ENCODE measurements at regions of chr7 and their contacts with region 1.

Region 1: DNA sequence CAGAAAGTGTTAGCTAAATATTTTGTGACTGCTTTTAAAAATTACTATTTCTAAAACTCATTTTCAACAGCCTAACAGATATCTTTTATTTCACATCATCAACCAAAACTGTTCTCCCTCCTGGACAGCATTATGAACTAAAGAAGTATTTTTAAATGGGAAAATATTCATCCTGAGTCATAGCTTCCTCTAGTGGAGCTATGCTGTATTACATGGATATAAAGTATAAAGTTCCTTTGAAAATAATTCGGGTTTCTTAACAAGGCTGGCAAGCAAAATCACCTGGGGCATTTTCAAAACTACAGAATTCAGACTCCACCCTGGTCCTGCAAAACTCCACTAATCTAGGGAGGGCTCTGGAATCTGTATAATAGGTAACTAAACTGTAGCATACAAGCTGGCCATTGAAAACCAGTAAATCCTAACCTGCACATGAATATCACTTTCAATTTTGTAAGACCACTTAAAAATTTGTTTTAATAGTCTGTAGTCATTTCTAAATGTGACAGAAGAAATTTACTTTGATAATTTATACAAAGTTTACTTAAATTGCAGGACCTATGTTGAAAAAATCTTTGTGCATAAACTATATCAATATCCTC is 53.5 kb downstream of the SCIN start:
- DNase-seq: no peak
- H3K4me3 ChIP-seq: no peak overlapping the region
- H3K27ac ChIP-seq: no peak overlapping the region
- H3K27me3 ChIP-seq: peaks cover 0 to 7% (median 0%) of the 10 kb centered on the region in 45 donors
- CTCF ChIP-seq: peak; percentile 41 to 78 (median 67)

Region 2: DNA sequence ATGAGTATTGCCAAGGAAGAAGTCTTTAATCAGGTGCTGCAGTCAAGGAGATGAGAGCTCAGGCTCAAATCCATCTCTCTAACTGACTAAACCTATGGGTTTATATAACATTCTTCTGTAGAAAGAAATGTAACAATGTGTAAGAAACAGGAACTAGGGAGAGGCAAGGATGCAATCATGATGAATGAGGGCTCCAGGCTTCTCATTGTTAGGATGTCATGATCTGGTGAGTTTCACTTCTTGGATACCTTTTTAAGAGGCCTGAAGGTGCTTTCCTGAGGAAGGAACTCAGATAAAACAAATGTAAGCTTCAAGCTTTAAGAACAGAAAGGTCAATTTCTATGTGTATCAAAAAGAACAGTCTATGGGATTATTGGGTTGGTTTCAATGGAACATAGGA is 84.3 kb before region 1 on chr7:
- intact Hi-C with region 1: loop called in 1 of 2 experiments (anchors 10 kb)
- DNase-seq: no peak
- H3K4me3 ChIP-seq: no peak overlapping the region
- H3K27ac ChIP-seq: no peak overlapping the region
- H3K27me3 ChIP-seq: no peaks in the 10 kb centered on the region
- CTCF ChIP-seq: no peak